ENCODE measurements at regions of chr1 and their contacts with region 1.

Region 1: DNA sequence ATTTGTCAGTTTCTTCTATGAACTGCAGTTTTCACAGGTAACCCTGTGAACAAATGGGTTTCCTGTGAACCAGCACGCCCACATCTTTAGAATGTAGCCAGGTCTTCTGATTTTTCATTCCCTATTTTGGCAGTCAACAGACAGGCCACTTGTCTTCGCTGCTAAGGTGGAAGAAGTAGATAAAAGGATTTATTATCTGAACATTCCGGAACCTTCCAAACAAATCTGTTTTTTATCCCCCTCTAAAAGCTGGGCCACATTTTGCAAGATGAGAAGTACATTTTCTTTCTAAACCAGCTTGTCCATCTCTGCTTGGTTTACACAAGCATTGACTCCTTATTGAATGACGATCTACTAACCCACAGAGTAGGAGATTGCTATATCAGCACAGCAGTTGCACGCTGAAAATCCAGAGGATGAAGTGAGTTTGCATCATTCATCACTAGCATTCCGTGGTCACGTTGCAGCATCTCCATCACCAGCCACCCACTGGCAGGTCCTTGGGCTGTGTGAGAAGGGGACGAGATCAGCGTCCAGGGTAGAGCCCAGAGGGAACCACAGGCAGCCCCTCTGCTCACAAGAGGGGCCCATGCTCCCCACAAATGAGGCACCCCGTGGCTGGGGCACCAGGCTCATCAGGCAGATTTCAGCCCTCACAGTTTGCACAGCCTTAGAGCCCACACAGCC is 83.5 kb downstream of the TOMM20 start:
- DNase-seq: no peak

Region 2: GRCh38 chr1:235004840-235005391 is 40.3 kb before region 1 on chr1:
- intact Hi-C with region 1: loop called in 1 of 2 experiments (anchors 2 kb)
- DNase-seq: no peak

Measured in posterior vena cava (tissue), 2 donors.